Dorsolateral prefrontal cortex (tissue), 120 donors: ENCODE measurements at regions of chr6 and their contacts with region 1.

Region 1: GRCh38 chr6:39887381-39888070 is 46.7 kb downstream of the MOCS1 start:
- DNase-seq: peak; percentile 11 to 90 (median 84)
- H3K4me3 ChIP-seq: no peak overlapping the region
- H3K27ac ChIP-seq: peak overlapping the region; percentile 9 to 96 (median 89)
- H3K27me3 ChIP-seq: no peaks in the 10 kb centered on the region
- CTCF ChIP-seq: peak in 12 of 56 donors; percentile 5 to 41 (median 20)

Region 2: GRCh38 chr6:39369987-39370386 is 517.5 kb before region 1 on chr6:
- intact Hi-C with region 1: loop called (anchors 5 to 10 kb)
- DNase-seq: no peak
- H3K4me3 ChIP-seq: no peak overlapping the region
- H3K27ac ChIP-seq: no peak overlapping the region
- H3K27me3 ChIP-seq: no peaks in the 10 kb centered on the region
- CTCF ChIP-seq: peak in 40 of 56 donors; percentile 14 to 58 (median 34)

Region 3: DNA sequence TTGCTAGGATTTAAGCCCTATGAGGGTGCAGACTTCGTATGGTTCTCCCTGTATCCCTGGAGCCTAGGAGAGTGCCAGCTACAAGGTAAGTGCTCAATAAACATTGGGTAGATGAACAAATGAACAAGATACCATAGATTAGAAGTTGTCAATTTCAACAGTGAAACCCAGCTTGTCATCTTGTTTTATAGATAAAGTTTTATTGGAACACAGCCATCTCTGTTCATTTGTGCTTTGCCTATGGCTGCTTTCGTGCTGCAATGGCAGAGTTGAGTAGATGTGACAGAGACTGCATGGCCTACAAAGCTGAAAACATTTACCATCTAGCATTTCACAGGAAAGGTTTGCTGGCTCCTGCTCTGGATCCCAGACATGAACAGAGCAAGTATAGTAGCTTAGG is 89.8 kb before region 1 on chr6:
- intact Hi-C with region 1: loop called (anchors 5 kb)
- DNase-seq: no peak
- H3K4me3 ChIP-seq: peak overlapping the region in 2 of 59 donors; percentile 8 to 11
- H3K27ac ChIP-seq: peak overlapping the region in 40 of 59 donors; percentile 5 to 98 (median 92)
- H3K27me3 ChIP-seq: peaks cover 0 to 2% (median 0%) of the 10 kb centered on the region in 45 donors
- CTCF ChIP-seq: no peak